Heart left ventricle (tissue), 16 donors: ENCODE measurements at regions of chr2 and their contacts with region 1.

Region 1: DNA sequence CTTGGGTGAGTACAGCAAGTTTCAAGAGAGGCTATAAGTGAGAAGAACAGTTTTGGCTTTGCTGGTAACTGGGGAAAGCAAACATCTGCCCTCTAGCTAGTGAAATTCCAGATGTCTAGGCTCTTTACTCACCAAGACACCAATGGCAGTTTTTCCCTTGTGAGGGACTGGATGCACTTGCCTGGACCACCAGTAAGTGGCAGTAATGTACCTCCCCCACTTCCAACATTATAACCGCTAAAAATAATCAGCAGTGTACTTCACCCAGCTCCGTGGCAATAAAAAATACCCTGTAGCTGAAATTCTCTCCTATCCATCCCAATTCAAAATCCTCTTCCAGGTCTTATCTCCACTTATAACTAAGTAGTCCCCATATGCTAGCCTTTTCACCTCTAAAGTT is 383.9 kb downstream of the ARHGAP15 start:
- DNase-seq: peak in 3 of 5 donors; percentile 27 to 33 (median 31)
- ATAC-seq: peak; percentile 37 to 85 (median 82)
- H3K4me3 ChIP-seq: no peak overlapping the region
- H3K27ac ChIP-seq: peak overlapping the region in 6 of 12 donors; percentile 9 to 36 (median 28)
- H3K4me1 ChIP-seq: peaks cover 0 to 6% (median 0%) of the 10 kb centered on the region in 12 donors
- H3K27me3 ChIP-seq: no peaks in the 10 kb centered on the region
- CTCF ChIP-seq: peak; percentile 55 to 82 (median 71)
- POLR2A ChIP-seq: no peak

Region 2: GRCh38 chr2:144078106-144078505 is 565.0 kb after region 1 on chr2:
- intact Hi-C with region 1: loop called in 1 of 10 experiments (anchors 10 kb)
- DNase-seq: no peak
- ATAC-seq: peak in 3 of 4 donors; percentile 18 to 47 (median 39)
- H3K4me3 ChIP-seq: no peak overlapping the region
- H3K27ac ChIP-seq: no peak overlapping the region
- H3K4me1 ChIP-seq: peaks cover 0 to 18% (median 0%) of the 10 kb centered on the region in 12 donors
- H3K27me3 ChIP-seq: no peaks in the 10 kb centered on the region
- CTCF ChIP-seq: no peak
- POLR2A ChIP-seq: no peak

Region 3: DNA sequence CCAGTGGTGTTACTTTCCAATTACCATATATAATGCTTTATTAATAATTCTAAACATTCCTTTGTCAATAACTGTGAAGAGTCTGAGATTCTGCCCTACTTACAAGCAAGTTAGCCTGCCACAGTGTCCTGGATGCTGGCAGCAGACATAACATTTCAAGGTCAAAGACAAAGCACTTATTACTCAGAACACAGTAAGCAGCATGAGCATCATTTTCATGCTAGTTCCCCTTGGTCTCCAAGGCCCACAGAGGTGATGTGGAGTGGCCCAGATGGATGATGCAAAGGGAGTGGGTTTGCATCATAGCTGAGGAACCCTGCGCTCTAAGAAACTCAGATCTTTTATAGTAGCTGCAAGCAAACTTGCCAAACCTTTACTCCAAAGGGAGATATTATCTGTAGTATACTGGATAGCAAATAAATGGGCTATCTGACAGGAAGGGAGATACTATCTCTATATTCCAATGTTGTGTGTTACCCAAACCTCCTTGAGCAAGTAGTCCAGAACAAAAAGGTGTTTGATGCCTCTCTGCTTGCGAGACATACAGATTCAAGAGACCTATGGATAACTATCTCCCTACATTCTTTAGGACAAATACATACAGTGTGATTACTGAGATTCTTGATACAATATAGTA is 657.2 kb after region 1 on chr2:
- intact Hi-C with region 1: no loop called
- DNase-seq: no peak
- ATAC-seq: no peak
- H3K4me3 ChIP-seq: no peak overlapping the region
- H3K27ac ChIP-seq: no peak overlapping the region
- H3K4me1 ChIP-seq: no peaks in the 10 kb centered on the region
- H3K27me3 ChIP-seq: no peaks in the 10 kb centered on the region
- CTCF ChIP-seq: no peak
- POLR2A ChIP-seq: no peak